ENCODE measurements at regions of chr16 and their contacts with region 1.

Region 1: GRCh38 chr16:87387942-87388817 is 4.0 kb upstream of the MAP1LC3B start:
- DNase-seq: peak; percentile 97
- ATAC-seq: peak; percentile 80
- H3K4me3 ChIP-seq: 0 out of 2 replicates have a peak overlapping the region, but pooled peaks have one; percentile 9
- H3K27ac ChIP-seq: peak overlapping the region; percentile 79
- H3K4me1 ChIP-seq: peaks cover 13% of the 10 kb centered on the region
- H3K27me3 ChIP-seq: no peaks in the 10 kb centered on the region
- CTCF ChIP-seq: no peak
- EP300 ChIP-seq: peak; percentile 31 to 72; a peak in 3 of 4 replicates
- POLR2A ChIP-seq: peak; percentile 29; the same call in 1 of the 2 replicates
- RAD21 ChIP-seq: no peak

Region 2: GRCh38 chr16:87316923-87317749 is 71.0 kb before region 1 on chr16 and contains the start of gene C16orf95:
- CTCF ChIA-PET with region 1: interaction called, 6 read pairs
- POLR2A ChIA-PET with region 1: interaction called, 19 read pairs
- RAD21 ChIA-PET with region 1: interaction called, 16 read pairs
- SMC1A ChIA-PET with region 1: interaction called, 8 read pairs
- in situ Hi-C with region 1: no loop called
- intact Hi-C with region 1: loop called (anchors 2 kb)
- DNase-seq: peak; percentile 80
- ATAC-seq: peak; percentile 97
- H3K4me3 ChIP-seq: peak within 1 kb of the TSS; percentile 89
- H3K27ac ChIP-seq: peak within 1 kb of the TSS; percentile 95
- H3K4me1 ChIP-seq: peaks cover 12% of the 10 kb centered on the region
- H3K27me3 ChIP-seq: no peaks in the 10 kb centered on the region
- CTCF ChIP-seq: peak; percentile 72 to 74 (median 72)
- EP300 ChIP-seq: no peak
- POLR2A ChIP-seq: peak; percentile 94
- RAD21 ChIP-seq: peak; percentile 55
- polyA plus RNA-seq, gene C16orf95: 0.90 to 4.8 TPM

Region 3: GRCh38 chr16:87461466-87461991 is 73.3 kb after region 1 on chr16:
- CTCF ChIA-PET with region 1: no interaction called
- POLR2A ChIA-PET with region 1: no interaction called
- RAD21 ChIA-PET with region 1: no interaction called
- SMC1A ChIA-PET with region 1: no interaction called
- in situ Hi-C with region 1: no loop called
- intact Hi-C with region 1: no loop called
- DNase-seq: no peak
- ATAC-seq: peak; percentile 78
- H3K4me3 ChIP-seq: no peak overlapping the region
- H3K27ac ChIP-seq: no peak overlapping the region
- H3K4me1 ChIP-seq: peaks cover 7% of the 10 kb centered on the region
- H3K27me3 ChIP-seq: no peaks in the 10 kb centered on the region
- CTCF ChIP-seq: peak; percentile 50 to 60 (median 59)
- EP300 ChIP-seq: no peak
- POLR2A ChIP-seq: no peak
- RAD21 ChIP-seq: peak; percentile 35; the same call in 1 of the 2 replicates

Region 4: DNA sequence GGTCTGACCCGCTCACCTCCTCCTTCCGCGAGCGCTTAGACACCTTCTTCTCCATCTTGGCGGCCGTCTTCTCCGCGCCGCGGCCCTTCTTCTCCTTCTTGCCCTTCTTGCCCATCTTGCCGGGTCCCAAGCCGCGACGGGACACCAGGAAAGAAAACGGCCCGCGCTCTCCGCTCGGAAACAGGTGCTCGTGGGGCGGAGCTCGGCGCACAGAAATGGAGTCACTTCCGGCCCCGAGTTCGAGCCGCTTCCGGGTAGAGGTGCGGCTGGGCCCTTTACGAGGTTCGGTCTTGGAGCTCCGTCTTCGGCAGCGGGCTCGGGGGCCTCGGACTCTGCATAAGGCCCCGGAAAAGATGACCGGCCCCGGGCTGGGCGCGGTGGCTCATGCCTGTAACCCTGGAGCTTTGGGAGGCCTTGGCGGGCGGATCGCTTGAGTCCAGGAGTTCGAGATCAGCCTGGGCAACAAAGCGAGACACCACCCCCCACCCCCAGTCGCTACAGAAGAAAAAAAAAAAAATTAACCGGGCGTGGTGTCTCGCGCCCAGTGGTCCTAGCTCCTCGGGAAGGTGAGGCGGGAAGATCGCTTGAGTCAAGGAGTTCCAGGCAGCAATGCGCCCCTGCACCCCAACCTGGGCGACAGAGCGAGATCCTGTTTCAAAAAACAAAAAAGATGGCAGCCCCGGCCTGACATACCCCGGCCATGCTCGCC is 377.8 kb after region 1 on chr16 and contains the start of gene KLHDC4:
- CTCF ChIA-PET with region 1: no interaction called
- POLR2A ChIA-PET with region 1: interaction called, 5 read pairs
- RAD21 ChIA-PET with region 1: interaction called, 5 read pairs
- SMC1A ChIA-PET with region 1: no interaction called
- in situ Hi-C with region 1: no loop called
- intact Hi-C with region 1: loop called (anchors 5 kb)
- DNase-seq: peak; percentile 38
- ATAC-seq: peak; percentile 90
- H3K4me3 ChIP-seq: peak within 1 kb of the TSS; percentile 89
- H3K27ac ChIP-seq: peak within 1 kb of the TSS; percentile 93
- H3K4me1 ChIP-seq: peaks cover 6% of the 10 kb centered on the region
- H3K27me3 ChIP-seq: no peaks in the 10 kb centered on the region
- CTCF ChIP-seq: no peak
- EP300 ChIP-seq: no peak
- POLR2A ChIP-seq: peak; percentile 95
- RAD21 ChIP-seq: no peak
- polyA plus RNA-seq, gene KLHDC4: 0.80 to 4.1 TPM

Region 5: GRCh38 chr16:87950765-87951549 is 562.8 kb after region 1 on chr16 and contains the start of gene BANP:
- CTCF ChIA-PET with region 1: no interaction called
- POLR2A ChIA-PET with region 1: interaction called, 3 read pairs
- RAD21 ChIA-PET with region 1: no interaction called
- SMC1A ChIA-PET with region 1: no interaction called
- in situ Hi-C with region 1: no loop called
- intact Hi-C with region 1: loop called (anchors 2 kb)
- DNase-seq: peak; percentile 97
- ATAC-seq: peak; percentile 97
- H3K4me3 ChIP-seq: peak within 1 kb of the TSS; percentile 91
- H3K27ac ChIP-seq: peak within 1 kb of the TSS; percentile 98
- H3K4me1 ChIP-seq: peaks cover 14% of the 10 kb centered on the region
- H3K27me3 ChIP-seq: no peaks in the 10 kb centered on the region
- CTCF ChIP-seq: peak; percentile 46 to 76 (median 52)
- EP300 ChIP-seq: no peak
- POLR2A ChIP-seq: peak; percentile 62; the same call in 1 of the 2 replicates
- RAD21 ChIP-seq: no peak
- polyA plus RNA-seq, gene BANP: 3.9 to 7.3 TPM

Measured in GM12878 (cell line).